SK-N-SH (cell line): ENCODE measurements at regions of chr6 and their contacts with region 1.

Region 1: GRCh38 chr6:32933636-32934085 is 7.2 kb downstream of the HLA-DMB start:
- DNase-seq: peak; percentile 66
- H3K4me3 ChIP-seq: peak overlapping the region in 1 of 2 experiments; percentile 27; a peak in 1 of 4 replicates
- H3K27ac ChIP-seq: no peak overlapping the region
- H3K4me1 ChIP-seq: no peaks in the 10 kb centered on the region
- H3K27me3 ChIP-seq: peaks cover 34% of the 10 kb centered on the region; the same call in 1 of the 2 replicates
- CTCF ChIP-seq: peak; percentile 86
- EP300 ChIP-seq: no peak
- RAD21 ChIP-seq: peak; percentile 76

Region 2: DNA sequence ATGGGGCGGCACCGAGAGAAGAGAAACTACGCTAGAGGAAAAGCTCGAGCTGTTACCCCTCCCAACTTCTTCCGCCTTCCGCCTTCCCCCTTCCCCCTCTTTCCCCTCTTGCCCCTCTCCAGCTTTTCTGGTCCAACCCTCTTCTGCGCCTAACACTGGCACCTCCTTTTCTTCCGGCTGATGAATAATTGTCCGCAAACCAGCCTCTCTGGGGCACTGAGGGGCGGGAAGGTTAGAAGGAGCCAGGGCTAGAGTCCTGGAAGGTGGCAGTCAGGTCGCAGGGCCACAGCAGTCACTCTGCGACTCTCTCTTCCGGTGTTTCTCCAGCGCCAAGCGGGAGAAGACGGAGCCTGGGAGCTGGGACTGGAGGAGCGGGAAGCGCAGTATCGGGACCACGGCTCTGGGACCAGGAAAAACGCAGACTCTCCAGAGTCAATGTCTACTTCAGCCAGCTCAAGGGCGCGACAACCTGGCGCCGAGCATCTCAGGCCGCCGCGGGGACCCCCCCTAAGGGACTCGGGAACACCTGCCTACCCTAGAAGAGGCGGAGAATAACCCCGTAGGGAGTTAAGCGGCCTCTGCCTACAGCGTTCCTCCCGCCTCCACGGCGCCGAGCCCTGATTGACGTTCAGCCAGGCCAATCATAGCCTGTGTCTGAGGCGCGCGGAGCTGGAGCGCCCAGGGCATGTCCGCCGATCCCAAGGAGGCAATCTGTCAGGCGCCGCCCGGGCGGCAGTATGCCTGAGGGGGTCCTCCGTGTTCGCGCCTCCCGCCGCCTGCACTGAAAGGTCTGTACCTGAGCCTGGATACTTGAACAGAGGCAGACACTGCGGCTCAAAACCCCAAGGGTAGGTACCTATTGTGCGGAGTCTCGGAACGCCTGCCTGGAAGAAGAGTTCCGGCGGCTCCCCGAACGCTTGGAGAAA is 39.3 kb before region 1 on chr6:
- CTCF ChIA-PET with region 1: interaction called, 14 read pairs
- POLR2A ChIA-PET with region 1: no interaction called
- DNase-seq: peak; percentile 98
- H3K4me3 ChIP-seq: peak overlapping the region; percentile 73 to 90
- H3K27ac ChIP-seq: peak overlapping the region; percentile 73 to 92
- H3K4me1 ChIP-seq: peaks cover 0 to 8% of the 10 kb centered on the region in 2 experiments; a peak in 2 of 4 replicates
- H3K27me3 ChIP-seq: no peaks in the 10 kb centered on the region
- CTCF ChIP-seq: peak; percentile 35
- EP300 ChIP-seq: no peak
- RAD21 ChIP-seq: no peak

Region 3: GRCh38 chr6:32912951-32913350 is 20.7 kb before region 1 on chr6:
- CTCF ChIA-PET with region 1: interaction called, 60 read pairs
- POLR2A ChIA-PET with region 1: no interaction called
- DNase-seq: no peak
- H3K4me3 ChIP-seq: no peak overlapping the region
- H3K27ac ChIP-seq: no peak overlapping the region
- H3K4me1 ChIP-seq: no peaks in the 10 kb centered on the region
- H3K27me3 ChIP-seq: no peaks in the 10 kb centered on the region; the same call in 1 of the 2 replicates
- CTCF ChIP-seq: no peak
- EP300 ChIP-seq: no peak
- RAD21 ChIP-seq: no peak

Region 4: GRCh38 chr6:32947552-32948465 is 14.1 kb after region 1 on chr6:
- CTCF ChIA-PET with region 1: interaction called, 187 read pairs
- POLR2A ChIA-PET with region 1: no interaction called
- DNase-seq: peak; percentile 21
- H3K4me3 ChIP-seq: no peak overlapping the region
- H3K27ac ChIP-seq: no peak overlapping the region
- H3K4me1 ChIP-seq: peaks cover 0 to 2% of the 10 kb centered on the region in 2 experiments; a peak in 1 of 4 replicates
- H3K27me3 ChIP-seq: peaks cover 14% of the 10 kb centered on the region; the same call in 1 of the 2 replicates
- CTCF ChIP-seq: peak; percentile 61
- EP300 ChIP-seq: no peak
- RAD21 ChIP-seq: peak; percentile 74

Region 5: DNA sequence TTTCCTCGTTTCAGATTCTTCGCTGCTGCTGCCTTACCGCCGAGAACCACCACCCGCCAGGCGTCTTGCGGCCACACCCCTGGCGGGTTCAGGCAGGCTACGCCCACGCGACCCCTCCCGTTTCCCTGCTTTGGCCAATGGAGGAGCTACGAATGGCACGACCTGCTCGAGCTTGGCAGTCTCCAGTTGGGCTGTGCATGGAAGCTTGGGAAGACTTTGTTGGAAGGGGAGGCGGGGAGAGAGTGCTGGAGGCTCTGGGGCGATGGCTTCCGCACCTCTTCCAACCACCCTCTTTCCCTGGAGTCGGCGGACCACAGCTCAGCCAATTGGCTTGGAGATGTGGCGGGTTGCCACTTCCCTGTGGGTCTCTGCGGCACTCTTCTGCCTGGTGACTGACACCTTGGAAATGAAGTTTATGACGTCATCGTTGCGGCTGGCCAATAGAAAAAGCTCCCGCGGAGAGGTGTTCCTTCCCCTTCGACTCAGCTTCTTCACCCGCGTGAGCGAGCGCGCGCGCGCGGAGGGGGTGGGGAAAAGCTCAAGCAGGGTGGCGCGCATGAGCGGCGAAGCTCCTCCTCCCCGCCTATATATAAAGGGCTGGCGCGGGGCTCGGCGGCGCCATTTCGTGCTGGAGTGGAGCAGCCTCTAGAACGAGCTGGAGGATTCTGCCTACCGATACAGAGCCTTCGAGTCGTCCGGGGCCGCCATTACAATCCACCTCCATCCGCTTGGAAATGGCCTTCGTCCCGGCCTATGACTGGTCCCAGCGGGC is 38.1 kb after region 1 on chr6:
- CTCF ChIA-PET with region 1: interaction called, 391 read pairs
- POLR2A ChIA-PET with region 1: interaction called, 7 read pairs
- DNase-seq: peak; percentile 92
- H3K4me3 ChIP-seq: peak overlapping the region; percentile 83 to 88
- H3K27ac ChIP-seq: peak overlapping the region; percentile 97 to 99
- H3K4me1 ChIP-seq: peaks cover 21 to 28% of the 10 kb centered on the region in 2 experiments; a peak in 3 of 4 replicates
- H3K27me3 ChIP-seq: no peaks in the 10 kb centered on the region
- CTCF ChIP-seq: no peak
- EP300 ChIP-seq: peak; percentile 7 to 55; a peak in 2 of 4 replicates
- RAD21 ChIP-seq: no peak

Region 6: GRCh38 chr6:34161857-34162515 is 1228.3 kb after region 1 on chr6:
- CTCF ChIA-PET with region 1: no interaction called
- POLR2A ChIA-PET with region 1: no interaction called
- DNase-seq: peak; percentile 4
- H3K4me3 ChIP-seq: no peak overlapping the region
- H3K27ac ChIP-seq: no peak overlapping the region
- H3K4me1 ChIP-seq: no peaks in the 10 kb centered on the region
- H3K27me3 ChIP-seq: no peaks in the 10 kb centered on the region
- CTCF ChIP-seq: no peak
- EP300 ChIP-seq: no peak
- RAD21 ChIP-seq: no peak